WTC11 (cell line): ENCODE measurements at regions of chr9 and their contacts with region 1.

Region 1: GRCh38 chr9:9605681-9606080 is 1007.1 kb downstream of the PTPRD start:
- DNase-seq: no peak
- ATAC-seq: no peak
- H3K4me3 Mint-ChIP-seq: no peak overlapping the region
- H3K27ac Mint-ChIP-seq: no peak overlapping the region
- H3K4me1 Mint-ChIP-seq: peaks cover 25% of the 10 kb centered on the region
- H3K27me3 Mint-ChIP-seq: no peaks in the 10 kb centered on the region
- CTCF ChIP-seq: no peak

Region 2: DNA sequence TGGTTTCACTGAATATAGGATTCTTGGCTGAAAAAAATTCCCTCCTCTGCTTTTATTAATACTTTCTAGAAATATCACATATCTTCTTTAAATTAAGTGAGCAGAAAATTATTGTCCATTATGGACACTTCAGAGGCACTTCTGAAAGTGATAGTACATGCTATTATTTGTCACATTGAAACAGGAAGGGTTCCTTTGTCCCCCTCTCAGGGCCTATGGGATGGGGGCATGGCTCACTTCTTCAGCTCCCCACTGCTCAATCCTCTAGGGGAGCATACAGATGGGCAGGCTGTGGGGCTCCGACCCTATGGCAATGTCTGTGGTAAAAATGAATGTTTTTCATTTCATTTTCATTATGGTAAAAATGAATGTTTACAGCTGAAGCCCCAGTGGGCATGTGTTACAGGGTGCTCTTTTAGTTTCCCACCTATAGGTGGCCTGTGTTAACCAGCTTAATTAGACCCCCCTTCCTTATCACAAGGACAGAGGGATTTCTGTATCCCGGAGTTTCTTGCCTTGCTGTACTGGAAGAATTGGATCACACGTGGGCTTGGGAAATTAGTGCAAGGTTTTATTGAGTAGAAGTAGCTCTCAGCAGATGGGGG is 218.1 kb before region 1 on chr9:
- CTCF ChIA-PET with region 1: no interaction called
- POLR2A ChIA-PET with region 1: no interaction called
- DNase-seq: no peak
- ATAC-seq: peak; percentile 73
- H3K4me3 Mint-ChIP-seq: no peak overlapping the region
- H3K27ac Mint-ChIP-seq: no peak overlapping the region
- H3K4me1 Mint-ChIP-seq: peaks cover 9% of the 10 kb centered on the region
- H3K27me3 Mint-ChIP-seq: no peaks in the 10 kb centered on the region
- CTCF ChIP-seq: 0 out of 2 replicates have a peak, but pooled peaks have one; percentile 30

Region 3: GRCh38 chr9:9631284-9631683 is 25.6 kb after region 1 on chr9:
- CTCF ChIA-PET with region 1: no interaction called
- POLR2A ChIA-PET with region 1: no interaction called
- DNase-seq: no peak
- ATAC-seq: peak; percentile 71; the same call in 1 of the 2 replicates
- H3K4me3 Mint-ChIP-seq: no peak overlapping the region
- H3K27ac Mint-ChIP-seq: peak overlapping the region; percentile 75
- H3K4me1 Mint-ChIP-seq: peaks cover 19% of the 10 kb centered on the region
- H3K27me3 Mint-ChIP-seq: no peaks in the 10 kb centered on the region
- CTCF ChIP-seq: no peak

Region 4: GRCh38 chr9:9645006-9645405 is 39.3 kb after region 1 on chr9:
- CTCF ChIA-PET with region 1: no interaction called
- POLR2A ChIA-PET with region 1: no interaction called
- DNase-seq: no peak
- ATAC-seq: no peak
- H3K4me3 Mint-ChIP-seq: no peak overlapping the region
- H3K27ac Mint-ChIP-seq: no peak overlapping the region
- H3K4me1 Mint-ChIP-seq: 0 out of 2 replicates have a peak, but pooled peaks cover 6% of the 10 kb centered on the region
- H3K27me3 Mint-ChIP-seq: no peaks in the 10 kb centered on the region
- CTCF ChIP-seq: no peak

Region 5: GRCh38 chr9:9790216-9790872 is 184.7 kb after region 1 on chr9:
- CTCF ChIA-PET with region 1: interaction called, 47 read pairs
- POLR2A ChIA-PET with region 1: no interaction called
- DNase-seq: peak; percentile 26
- ATAC-seq: peak; percentile 46
- H3K4me3 Mint-ChIP-seq: no peak overlapping the region
- H3K27ac Mint-ChIP-seq: no peak overlapping the region
- H3K4me1 Mint-ChIP-seq: no peaks in the 10 kb centered on the region
- H3K27me3 Mint-ChIP-seq: no peaks in the 10 kb centered on the region
- CTCF ChIP-seq: peak; percentile 63; the same call in 1 of the 2 replicates